Activated T-helper 2 cell treated with anti-CD3 and anti-CD28 coated beads, Interferon-gamma antibody, Interleukin-2, Interleukin-4, amounts not matched to agents 10 μg/mL and 5 μg/mL and 100 μg/mL, durations not matched to agents 14 hours and 24 hours and 36 hours (primary cell): ENCODE measurements at regions of chr1 and their contacts with region 1.

Region 1: DNA sequence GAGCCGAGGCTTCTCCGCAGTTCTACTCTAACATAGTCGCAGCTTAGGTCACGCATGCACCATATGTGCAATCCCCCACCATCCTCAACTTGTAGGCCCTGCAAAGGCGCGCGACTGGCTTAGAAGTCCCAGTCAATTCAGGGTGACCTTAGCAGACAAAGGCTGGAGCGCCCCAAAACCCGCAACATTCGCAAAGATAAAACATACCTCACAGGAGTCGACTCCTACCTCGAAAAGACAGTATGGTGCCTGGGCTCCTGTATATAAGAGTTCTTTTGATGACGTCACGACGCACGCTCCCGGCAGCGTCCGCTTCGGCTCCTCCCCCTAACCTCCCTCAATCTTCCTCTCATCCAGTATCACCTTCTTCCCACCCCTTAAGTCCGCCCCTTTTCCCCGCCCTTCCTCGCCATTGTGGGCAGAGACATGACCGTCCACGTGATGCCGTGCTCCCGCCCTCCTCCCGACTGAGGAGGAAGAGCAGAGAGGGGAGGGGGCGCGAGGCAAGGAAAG is at the start of gene GAS5:
- DNase-seq: peak; percentile 99
- H3K4me3 Mint-ChIP-seq: peak within 1 kb of the TSS; percentile 98
- H3K27ac Mint-ChIP-seq: peak within 1 kb of the TSS; percentile 96
- H3K4me1 Mint-ChIP-seq: peaks cover 49% of the 10 kb centered on the region
- H3K27me3 Mint-ChIP-seq: no peaks in the 10 kb centered on the region
- total RNA-seq, gene GAS5: 650 and 661 TPM in 2 replicates

Region 2: GRCh38 chr1:172662464-172663109 is 1205.2 kb before region 1 on chr1:
- intact Hi-C with region 1: loop called (anchors 10 kb)
- DNase-seq: peak; percentile 80
- H3K4me3 Mint-ChIP-seq: peak overlapping the region; percentile 90
- H3K27ac Mint-ChIP-seq: peak overlapping the region; percentile 94
- H3K4me1 Mint-ChIP-seq: peaks cover 74% of the 10 kb centered on the region
- H3K27me3 Mint-ChIP-seq: no peaks in the 10 kb centered on the region

Region 3: DNA sequence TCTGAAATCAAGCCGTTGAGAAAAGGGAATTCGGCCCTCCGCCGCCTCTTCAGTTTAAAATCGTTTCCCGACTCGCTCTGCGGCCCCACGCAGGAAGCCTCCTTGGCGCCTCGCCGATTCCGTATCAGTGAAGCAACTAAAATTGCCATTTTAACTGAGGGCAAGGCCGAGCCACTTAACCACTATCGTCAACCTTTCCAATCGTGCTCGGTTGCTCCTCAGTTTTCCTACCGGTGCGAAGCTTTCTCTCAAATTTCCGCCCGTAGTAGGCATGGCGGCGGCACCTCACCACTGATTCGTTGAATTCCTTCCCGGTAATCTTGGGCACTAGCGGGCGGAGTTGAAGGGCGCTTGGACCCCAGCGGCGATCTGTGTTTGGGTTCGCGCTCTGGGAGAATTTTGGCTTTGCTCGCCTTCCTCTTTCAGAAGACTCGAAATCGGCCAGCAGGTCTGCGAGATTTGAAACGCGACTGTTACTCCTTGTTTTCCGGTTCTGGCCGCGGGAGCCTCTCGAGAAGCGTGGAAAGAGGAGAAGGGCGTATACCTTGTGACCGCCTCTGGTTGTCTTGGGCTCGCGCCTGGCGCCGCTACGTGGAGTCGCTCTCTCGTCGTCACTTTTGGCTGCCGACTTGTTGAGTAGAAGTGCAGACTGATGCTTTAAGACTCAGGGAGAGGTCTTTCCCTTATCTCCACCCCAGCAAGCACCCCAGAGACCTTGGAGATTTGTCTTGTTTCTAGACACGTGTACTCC is 43.3 kb before region 1 on chr1 and contains the starts of genes CENPL and DARS2:
- intact Hi-C with region 1: loop called (anchors 1 kb)
- DNase-seq: peak; percentile 91
- H3K4me3 Mint-ChIP-seq: peak within 1 kb of the TSS; percentile 98
- H3K27ac Mint-ChIP-seq: peak within 1 kb of the TSS; percentile 99
- H3K4me1 Mint-ChIP-seq: peaks cover 36% of the 10 kb centered on the region
- H3K27me3 Mint-ChIP-seq: no peaks in the 10 kb centered on the region
- total RNA-seq, gene CENPL: 26.1 and 26.2 TPM in 2 replicates
- total RNA-seq, gene DARS2: 49.7 and 49.9 TPM in 2 replicates

Region 4: GRCh38 chr1:174022080-174022975 is 154.5 kb after region 1 on chr1 and contains the start of gene RC3H1:
- intact Hi-C with region 1: loop called (anchors 2 kb)
- DNase-seq: peak; percentile 85
- H3K4me3 Mint-ChIP-seq: peak within 1 kb of the TSS; percentile 99
- H3K27ac Mint-ChIP-seq: peak within 1 kb of the TSS; percentile 90
- H3K4me1 Mint-ChIP-seq: peaks cover 35% of the 10 kb centered on the region
- H3K27me3 Mint-ChIP-seq: peaks cover 2% of the 10 kb centered on the region
- total RNA-seq, gene RC3H1: 30.4 and 33.5 TPM in 2 replicates

Region 5: GRCh38 chr1:174999216-174999925 is 1131.6 kb after region 1 on chr1:
- intact Hi-C with region 1: loop called (anchors 10 kb)
- DNase-seq: peak; percentile 96
- H3K4me3 Mint-ChIP-seq: no peak overlapping the region
- H3K27ac Mint-ChIP-seq: no peak overlapping the region
- H3K4me1 Mint-ChIP-seq: peaks cover 38% of the 10 kb centered on the region
- H3K27me3 Mint-ChIP-seq: no peaks in the 10 kb centered on the region